ENCODE measurements at regions of chr12 and their contacts with region 1.

Region 1: GRCh38 chr12:56688129-56688845 is at the start of gene PTGES3:
- DNase-seq: peak; percentile 97
- ATAC-seq: peak; percentile 75
- H3K4me3 Mint-ChIP-seq: peak within 1 kb of the TSS; percentile 100
- H3K27ac Mint-ChIP-seq: peak within 1 kb of the TSS; percentile 99
- H3K4me1 Mint-ChIP-seq: peaks cover 36% of the 10 kb centered on the region
- H3K27me3 Mint-ChIP-seq: no peaks in the 10 kb centered on the region
- CTCF ChIP-seq: no peak
- total RNA-seq, gene PTGES3: 183 and 185 TPM in 2 replicates

Region 2: GRCh38 chr12:56645717-56646446 is 42.4 kb before region 1 on chr12 and contains the start of gene ATP5F1B:
- CTCF ChIA-PET with region 1: no interaction called
- POLR2A ChIA-PET with region 1: interaction called, 55 read pairs
- intact Hi-C with region 1: loop called (anchors 1 kb)
- DNase-seq: peak; percentile 68
- ATAC-seq: peak; percentile 97
- H3K4me3 Mint-ChIP-seq: peak within 1 kb of the TSS; percentile 97
- H3K27ac Mint-ChIP-seq: peak within 1 kb of the TSS; percentile 99
- H3K4me1 Mint-ChIP-seq: peaks cover 25% of the 10 kb centered on the region
- H3K27me3 Mint-ChIP-seq: no peaks in the 10 kb centered on the region
- CTCF ChIP-seq: no peak
- total RNA-seq, gene ATP5F1B: 499 and 503 TPM in 2 replicates

Region 3: DNA sequence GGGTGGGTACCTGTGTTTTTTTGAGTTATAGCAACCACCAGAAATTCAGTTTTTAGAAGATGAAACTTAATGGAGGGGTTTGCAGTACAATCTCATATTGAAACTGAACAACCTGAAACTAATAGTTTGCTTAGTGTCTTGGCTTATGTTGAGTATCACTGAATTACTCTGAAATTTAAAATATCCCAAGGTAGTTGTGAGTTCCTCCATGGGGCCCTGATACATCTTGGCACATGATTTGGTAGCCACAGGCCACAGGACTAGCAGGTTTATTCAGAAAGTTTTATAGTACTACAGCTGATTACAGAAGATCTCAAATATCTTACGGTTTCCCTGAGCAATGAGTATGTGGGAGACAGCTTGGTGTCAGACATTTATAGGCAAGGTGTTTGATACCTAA is 10.6 kb before region 1 on chr12:
- CTCF ChIA-PET with region 1: no interaction called
- POLR2A ChIA-PET with region 1: interaction called, 19 read pairs
- intact Hi-C with region 1: no loop called
- DNase-seq: no peak
- ATAC-seq: no peak
- H3K4me3 Mint-ChIP-seq: no peak overlapping the region
- H3K27ac Mint-ChIP-seq: peak overlapping the region; percentile 42
- H3K4me1 Mint-ChIP-seq: peaks cover 53% of the 10 kb centered on the region
- H3K27me3 Mint-ChIP-seq: no peaks in the 10 kb centered on the region
- CTCF ChIP-seq: no peak

Region 4: GRCh38 chr12:56751712-56752598 is 63.7 kb after region 1 on chr12 and contains the start of gene PRIM1:
- CTCF ChIA-PET with region 1: no interaction called
- POLR2A ChIA-PET with region 1: interaction called, 13 read pairs
- intact Hi-C with region 1: loop called (anchors 1 kb)
- DNase-seq: peak; percentile 81
- ATAC-seq: peak; percentile 83
- H3K4me3 Mint-ChIP-seq: peak within 1 kb of the TSS; percentile 96
- H3K27ac Mint-ChIP-seq: peak within 1 kb of the TSS; percentile 94
- H3K4me1 Mint-ChIP-seq: peaks cover 43% of the 10 kb centered on the region
- H3K27me3 Mint-ChIP-seq: no peaks in the 10 kb centered on the region
- CTCF ChIP-seq: no peak
- total RNA-seq, gene PRIM1: 15.1 and 16.8 TPM in 2 replicates

Region 5: DNA sequence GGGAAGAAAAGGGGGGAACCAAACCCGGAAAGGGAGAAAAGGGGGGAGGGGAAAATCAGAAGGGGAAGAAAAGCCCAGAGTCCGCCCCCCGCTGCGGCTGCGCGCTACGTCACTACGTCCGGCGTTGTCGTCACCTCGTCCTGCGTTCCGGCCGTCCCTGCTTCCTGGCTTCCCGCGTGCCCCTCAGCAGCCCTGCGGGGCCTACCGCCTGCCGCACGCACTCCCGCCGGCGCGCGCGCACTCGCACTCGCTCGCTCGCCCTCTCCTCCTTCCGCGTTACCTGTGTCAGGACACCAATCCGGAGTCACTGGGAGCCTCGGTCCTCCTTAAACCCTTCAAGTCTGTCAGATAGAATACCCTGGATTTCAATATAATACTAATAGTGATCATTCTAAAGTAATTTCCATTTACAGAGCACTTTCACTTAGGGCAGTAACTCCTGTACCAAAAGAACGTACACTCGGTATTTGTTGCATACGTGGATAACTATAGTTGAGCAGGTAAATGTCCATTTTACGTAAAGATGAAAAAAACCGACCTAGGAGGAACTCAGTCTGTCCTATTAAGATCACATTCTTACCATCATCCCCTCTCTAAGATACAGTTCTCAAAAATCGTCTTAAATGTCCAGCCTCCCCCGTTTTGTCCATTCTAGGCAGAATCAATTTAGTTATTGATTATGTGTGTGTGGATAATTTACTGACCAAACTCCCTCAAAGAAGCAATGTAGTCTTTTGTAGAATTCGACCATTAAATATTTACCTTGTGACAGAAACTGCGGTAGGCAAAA is 742.8 kb after region 1 on chr12 and contains the start of gene R3HDM2:
- CTCF ChIA-PET with region 1: no interaction called
- POLR2A ChIA-PET with region 1: no interaction called
- intact Hi-C with region 1: loop called (anchors 10 kb)
- DNase-seq: peak; percentile 94
- ATAC-seq: peak; percentile 91
- H3K4me3 Mint-ChIP-seq: peak within 1 kb of the TSS; percentile 97
- H3K27ac Mint-ChIP-seq: peak within 1 kb of the TSS; percentile 99
- H3K4me1 Mint-ChIP-seq: peaks cover 39% of the 10 kb centered on the region
- H3K27me3 Mint-ChIP-seq: no peaks in the 10 kb centered on the region
- CTCF ChIP-seq: no peak
- total RNA-seq, gene R3HDM2: 74.2 and 75.6 TPM in 2 replicates